PC-9 (cell line): ENCODE measurements at regions of chrX and their contacts with region 1.

Region 1: GRCh38 chrX:154317391-154317995 is 21.9 kb downstream of the TKTL1 start:
- DNase-seq: no peak
- H3K4me3 ChIP-seq: no peak overlapping the region
- H3K27ac ChIP-seq: no peak overlapping the region
- H3K4me1 ChIP-seq: no peaks in the 10 kb centered on the region
- H3K27me3 ChIP-seq: no peaks in the 10 kb centered on the region; the same call in 1 of the 2 replicates
- CTCF ChIP-seq: peak; percentile 48

Region 2: DNA sequence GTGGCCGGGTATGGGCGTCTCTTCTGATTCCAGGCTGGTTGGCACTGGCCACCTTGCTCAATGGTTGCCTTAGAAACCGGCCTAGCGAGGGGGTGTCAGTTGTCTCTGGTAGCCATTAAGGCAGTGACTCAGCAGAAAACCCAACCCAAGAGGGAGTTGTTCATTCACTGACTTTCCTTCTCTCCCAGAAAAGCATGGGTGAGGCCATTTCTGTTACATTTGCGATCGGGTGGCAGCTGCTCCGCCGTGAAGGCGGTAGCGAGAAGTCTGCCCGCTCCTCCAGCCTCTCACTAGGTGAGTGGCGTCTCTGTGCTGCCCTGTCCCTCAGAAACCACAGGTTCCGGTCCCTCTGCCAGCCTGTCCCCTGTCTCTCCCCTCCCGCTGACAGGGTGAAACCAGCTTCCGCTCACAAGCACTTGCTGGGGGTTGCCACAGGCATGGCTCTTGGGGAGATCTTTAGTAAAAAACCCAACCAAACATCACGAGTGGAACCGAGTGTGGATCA is 315.2 kb before region 1 on chrX:
- CTCF ChIA-PET with region 1: no interaction called
- POLR2A ChIA-PET with region 1: interaction called, 10 read pairs
- intact Hi-C with region 1: no loop called
- DNase-seq: peak; percentile 45 to 76
- H3K4me3 ChIP-seq: no peak overlapping the region
- H3K27ac ChIP-seq: peak overlapping the region; percentile 58
- H3K4me1 ChIP-seq: peaks cover 15% of the 10 kb centered on the region
- H3K27me3 ChIP-seq: no peaks in the 10 kb centered on the region
- CTCF ChIP-seq: no peak